ENCODE measurements at regions of chr9 and their contacts with region 1.

Region 1: DNA sequence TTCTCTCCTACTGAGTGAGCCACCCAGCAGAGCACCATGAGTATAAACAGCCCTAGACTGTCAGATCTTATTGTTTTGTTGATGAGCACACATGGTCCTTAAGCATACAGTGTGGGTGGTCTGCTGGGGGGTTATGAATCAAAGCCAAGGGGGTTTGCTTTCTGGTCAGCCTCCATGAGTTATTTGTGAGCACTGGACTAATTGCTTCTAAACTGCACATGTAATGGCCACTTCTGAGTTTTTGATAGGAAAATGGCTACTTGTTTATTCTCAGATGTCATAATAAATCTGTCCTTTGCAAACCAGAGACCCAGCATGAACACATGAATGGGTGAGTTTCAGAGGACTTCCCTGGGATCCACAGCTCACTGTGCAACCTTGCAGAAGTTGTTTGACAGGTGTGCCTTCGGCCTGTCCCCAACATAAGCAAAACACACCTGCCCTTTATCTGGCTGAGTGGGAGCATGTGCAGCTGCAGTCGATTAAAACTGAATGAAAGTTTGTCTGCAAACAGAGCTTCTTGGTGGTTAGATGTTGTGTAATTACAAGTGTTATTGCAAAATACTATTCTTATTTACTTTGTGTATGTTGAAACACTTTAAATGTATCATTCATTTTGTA is 35.9 kb downstream of the MAMDC2 start:
- DNase-seq: no peak
- H3K4me3 ChIP-seq: no peak overlapping the region
- H3K27ac ChIP-seq: no peak overlapping the region
- H3K4me1 ChIP-seq: no peaks in the 10 kb centered on the region
- H3K27me3 ChIP-seq: peaks cover 0 to 15% of the 10 kb centered on the region in 2 experiments
- CTCF ChIP-seq: no peak
- POLR2A ChIP-seq: no peak

Region 2: DNA sequence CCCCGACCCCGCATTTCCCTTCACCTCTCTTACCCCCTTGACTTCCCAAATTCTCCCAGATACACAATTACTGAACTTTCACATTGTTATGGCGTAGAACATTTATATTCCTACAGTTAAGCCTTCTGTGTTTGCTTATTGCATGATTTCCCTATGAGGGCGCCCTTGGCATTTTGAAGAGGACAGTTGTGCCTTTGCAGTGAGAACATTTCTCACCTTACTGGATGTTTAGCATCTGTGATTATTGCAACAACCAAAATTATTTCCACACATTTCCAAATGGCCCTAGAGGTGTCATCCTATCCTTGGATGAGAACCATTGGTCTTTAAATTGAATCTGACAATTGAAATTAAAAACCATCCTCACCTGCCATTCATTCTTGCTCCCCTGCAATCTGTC is 68.1 kb after region 1 on chr9:
- CTCF ChIA-PET with region 1: no interaction called
- POLR2A ChIA-PET with region 1: no interaction called
- dilution Hi-C with region 1: no loop called
- intact Hi-C with region 1: loop called (anchors 10 kb)
- DNase-seq: no peak
- H3K4me3 ChIP-seq: no peak overlapping the region
- H3K27ac ChIP-seq: no peak overlapping the region
- H3K4me1 ChIP-seq: no peaks in the 10 kb centered on the region
- H3K27me3 ChIP-seq: no peaks in the 10 kb centered on the region
- CTCF ChIP-seq: no peak
- POLR2A ChIP-seq: no peak

Region 3: DNA sequence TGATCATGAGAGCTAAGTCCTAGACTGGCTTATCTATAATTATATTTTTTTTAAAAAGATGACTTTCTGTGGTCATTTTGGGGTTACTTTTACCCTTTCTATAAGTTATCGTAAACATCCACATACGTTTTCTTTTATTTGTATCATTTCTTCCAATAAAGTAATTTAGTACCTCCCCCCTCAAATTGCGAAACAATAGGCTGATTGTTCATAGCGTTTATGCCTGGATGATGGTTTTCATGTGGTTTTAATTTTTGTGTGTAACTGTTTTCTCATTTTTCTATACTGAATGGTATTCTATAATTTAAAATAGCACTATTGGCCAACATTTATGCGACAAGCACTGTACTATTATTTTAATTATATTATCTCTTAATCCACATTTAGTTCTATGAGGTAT is 223.7 kb after region 1 on chr9:
- CTCF ChIA-PET with region 1: no interaction called
- POLR2A ChIA-PET with region 1: no interaction called
- dilution Hi-C with region 1: no loop called
- intact Hi-C with region 1: no loop called
- DNase-seq: no peak
- H3K4me3 ChIP-seq: no peak overlapping the region
- H3K27ac ChIP-seq: no peak overlapping the region
- H3K4me1 ChIP-seq: no peaks in the 10 kb centered on the region
- H3K27me3 ChIP-seq: no peaks in the 10 kb centered on the region
- CTCF ChIP-seq: no peak
- POLR2A ChIP-seq: no peak